ENCODE measurements at regions of chr19 and their contacts with region 1.

Region 1: GRCh38 chr19:12736995-12737834 is at the start of gene GET3:
- DNase-seq: peak; percentile 87 to 97
- H3K4me3 ChIP-seq: peak within 1 kb of the TSS; percentile 65 to 91 (median 83)
- H3K27ac ChIP-seq: peak within 1 kb of the TSS; percentile 98
- H3K4me1 ChIP-seq: peaks cover 3 to 13% (median 7%) of the 10 kb centered on the region in 4 experiments
- H3K27me3 ChIP-seq: no peaks in the 10 kb centered on the region
- CTCF ChIP-seq: no peak
- EP300 ChIP-seq: peak in 1 of 2 experiments; percentile 99; a peak in 2 of 3 replicates
- POLR2A ChIP-seq: peak; percentile 80 to 83
- RAD21 ChIP-seq: no peak
- total RNA-seq, gene GET3: 105 and 106 TPM in 2 replicates

Region 2: DNA sequence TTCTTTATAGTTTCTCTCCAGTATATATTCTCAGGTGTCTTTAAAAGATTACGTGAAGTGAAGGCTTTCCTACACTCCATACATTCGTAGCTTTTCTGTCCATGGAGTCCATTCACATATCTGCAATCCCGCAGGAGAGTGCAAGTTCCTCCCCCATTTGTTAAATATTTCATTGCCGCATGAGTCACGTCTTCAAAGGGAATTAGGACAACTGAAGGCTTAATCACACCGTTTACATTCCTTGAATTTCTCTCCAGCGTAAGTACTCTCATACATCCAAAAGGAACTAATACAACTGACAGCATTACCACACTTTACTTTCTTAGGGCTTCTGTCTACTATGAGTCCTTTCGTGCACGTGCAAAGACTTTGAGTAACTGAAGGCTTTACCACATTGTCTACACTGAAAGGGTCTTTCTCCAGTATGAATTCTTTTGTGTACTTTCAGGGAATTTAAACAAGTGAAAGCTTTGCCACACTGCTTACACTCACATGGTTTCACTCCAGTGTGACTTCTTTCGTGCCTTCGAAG is 157.0 kb before region 1 on chr19:
- CTCF ChIA-PET with region 1: no interaction called
- POLR2A ChIA-PET with region 1: no interaction called
- DNase-seq: no peak
- H3K4me3 ChIP-seq: no peak overlapping the region
- H3K27ac ChIP-seq: no peak overlapping the region
- H3K4me1 ChIP-seq: no peaks in the 10 kb centered on the region
- H3K27me3 ChIP-seq: no peaks in the 10 kb centered on the region
- CTCF ChIP-seq: no peak
- EP300 ChIP-seq: no peak
- POLR2A ChIP-seq: no peak
- RAD21 ChIP-seq: no peak

Region 3: DNA sequence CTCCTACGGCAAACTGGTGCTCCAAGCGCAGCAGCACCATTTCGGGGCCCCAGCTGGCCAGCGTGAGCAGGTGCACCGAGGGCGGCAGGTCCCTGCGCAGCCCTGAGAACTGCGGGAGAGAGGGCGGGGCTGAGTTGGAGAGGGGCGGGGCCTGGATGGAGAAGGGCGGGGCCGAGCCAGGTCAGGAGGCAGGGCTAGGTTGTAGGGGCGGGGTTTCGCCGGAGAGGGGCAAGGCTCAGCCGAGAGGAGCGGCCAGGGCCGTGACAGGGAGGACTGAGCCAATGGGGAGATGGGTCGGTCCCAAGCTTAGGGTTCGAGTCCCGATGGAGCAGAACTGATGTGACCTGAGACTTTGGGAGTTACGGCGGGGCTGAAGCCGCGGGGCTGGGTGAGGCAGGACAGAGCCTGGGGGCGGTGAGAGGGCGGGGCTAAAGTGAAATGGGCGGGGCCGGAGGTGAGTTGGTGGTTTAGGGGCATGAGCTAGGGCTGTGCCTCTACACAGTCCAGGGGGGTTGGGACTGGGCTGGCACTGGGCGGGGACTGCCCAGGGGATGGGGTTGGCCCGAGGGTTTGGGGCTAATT is 89.6 kb before region 1 on chr19:
- CTCF ChIA-PET with region 1: no interaction called
- POLR2A ChIA-PET with region 1: no interaction called
- DNase-seq: peak; percentile 80 to 86
- H3K4me3 ChIP-seq: peak overlapping the region in 1 of 4 experiments; percentile 40; a peak in 2 of 8 replicates
- H3K27ac ChIP-seq: no peak overlapping the region
- H3K4me1 ChIP-seq: no peaks in the 10 kb centered on the region
- H3K27me3 ChIP-seq: no peaks in the 10 kb centered on the region
- CTCF ChIP-seq: peak in 1 of 3 experiments; percentile 20; a peak in 1 of 4 replicates
- EP300 ChIP-seq: no peak
- POLR2A ChIP-seq: no peak
- RAD21 ChIP-seq: 0 out of 4 replicates have a peak, but pooled peaks of 1 of the 2 experiments have one; percentile 2

Region 4: DNA sequence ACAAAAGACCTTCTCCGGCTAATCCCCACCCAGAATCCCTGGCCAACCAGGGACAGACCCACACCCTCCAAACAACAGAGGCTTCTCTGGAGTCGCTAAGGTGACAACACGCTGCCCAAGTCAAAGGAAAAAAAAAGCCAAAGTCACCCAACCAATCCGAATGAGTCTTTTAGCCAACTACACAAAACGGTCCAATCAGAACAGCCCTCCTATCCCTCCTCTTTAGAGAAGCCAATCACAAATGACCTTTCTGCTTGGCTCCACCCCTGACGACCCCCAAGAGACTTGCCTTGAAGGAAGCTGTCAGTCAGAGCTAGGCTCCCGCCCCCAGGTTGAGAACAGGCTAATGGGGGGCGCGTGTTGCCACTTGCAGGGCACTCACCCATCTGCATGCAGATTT is 34.2 kb before region 1 on chr19:
- CTCF ChIA-PET with region 1: no interaction called
- POLR2A ChIA-PET with region 1: interaction called, 11 read pairs
- DNase-seq: peak; percentile 82 to 89
- H3K4me3 ChIP-seq: no peak overlapping the region
- H3K27ac ChIP-seq: peak overlapping the region; percentile 71; the same call in 1 of the 2 replicates
- H3K4me1 ChIP-seq: peaks cover 0 to 5% (median 2%) of the 10 kb centered on the region in 4 experiments; a peak in 2 of 7 replicates
- H3K27me3 ChIP-seq: no peaks in the 10 kb centered on the region
- CTCF ChIP-seq: no peak
- EP300 ChIP-seq: no peak
- POLR2A ChIP-seq: no peak
- RAD21 ChIP-seq: no peak

Region 5: DNA sequence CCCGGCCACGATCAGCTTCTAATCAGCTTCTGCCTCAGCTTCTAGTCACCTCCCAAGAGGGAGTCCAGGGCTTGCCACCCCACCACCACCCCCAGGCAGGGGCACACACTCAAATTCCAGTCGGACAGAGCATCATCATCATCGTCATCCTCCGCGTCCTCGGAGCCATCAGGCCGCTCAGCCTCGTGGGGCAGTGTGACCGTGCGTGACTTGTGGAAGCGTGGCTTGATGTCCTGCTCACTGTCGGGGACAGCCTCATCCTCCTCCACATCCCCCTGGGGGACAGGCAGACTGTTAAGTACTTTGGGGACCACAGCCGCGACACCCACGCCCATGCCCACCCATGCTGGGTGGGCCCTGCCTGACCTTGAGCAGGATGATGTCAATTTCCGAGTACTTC is 26.0 kb before region 1 on chr19:
- CTCF ChIA-PET with region 1: interaction called, 12 read pairs
- POLR2A ChIA-PET with region 1: interaction called, 258 read pairs
- DNase-seq: no peak
- H3K4me3 ChIP-seq: no peak overlapping the region
- H3K27ac ChIP-seq: no peak overlapping the region
- H3K4me1 ChIP-seq: no peaks in the 10 kb centered on the region
- H3K27me3 ChIP-seq: no peaks in the 10 kb centered on the region
- CTCF ChIP-seq: no peak
- EP300 ChIP-seq: no peak
- POLR2A ChIP-seq: no peak
- RAD21 ChIP-seq: no peak

Region 6: DNA sequence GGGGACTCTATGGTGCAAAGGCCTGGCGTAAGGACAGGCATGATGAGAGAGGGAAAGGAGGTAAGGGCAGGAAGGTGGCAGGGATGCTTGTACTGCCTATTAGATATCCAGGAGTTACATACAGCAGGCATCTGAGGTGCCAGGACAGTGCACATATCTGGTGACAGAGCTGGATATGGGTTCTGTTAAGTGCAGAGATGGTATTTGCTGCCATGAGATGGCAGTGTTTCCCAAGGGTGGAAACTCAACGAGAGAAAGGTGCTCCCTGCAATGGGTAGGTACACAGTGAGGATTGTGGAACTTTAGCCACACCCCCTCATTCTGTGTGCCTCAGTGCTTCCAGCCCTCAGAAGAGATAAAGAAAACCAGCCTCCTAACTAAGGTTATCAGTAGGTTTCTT is 20.4 kb before region 1 on chr19:
- CTCF ChIA-PET with region 1: interaction called, 20 read pairs
- POLR2A ChIA-PET with region 1: interaction called, 258 read pairs
- DNase-seq: no peak
- H3K4me3 ChIP-seq: no peak overlapping the region
- H3K27ac ChIP-seq: no peak overlapping the region
- H3K4me1 ChIP-seq: peaks cover 0 to 6% (median 2%) of the 10 kb centered on the region in 4 experiments; a peak in 4 of 7 replicates
- H3K27me3 ChIP-seq: no peaks in the 10 kb centered on the region
- CTCF ChIP-seq: peak; percentile 19 to 65 (median 41); a peak in 3 of 4 replicates
- EP300 ChIP-seq: no peak
- POLR2A ChIP-seq: no peak
- RAD21 ChIP-seq: peak; percentile 60 to 68

Region 7: GRCh38 chr19:12749938-12750521 is 12.8 kb after region 1 on chr19:
- CTCF ChIA-PET with region 1: interaction called, 87 read pairs
- POLR2A ChIA-PET with region 1: interaction called, 104 read pairs
- DNase-seq: no peak
- H3K4me3 ChIP-seq: no peak overlapping the region
- H3K27ac ChIP-seq: no peak overlapping the region
- H3K4me1 ChIP-seq: peaks cover 0 to 10% (median 4%) of the 10 kb centered on the region in 4 experiments; a peak in 4 of 7 replicates
- H3K27me3 ChIP-seq: no peaks in the 10 kb centered on the region; a peak in 3 of 7 replicates
- CTCF ChIP-seq: no peak
- EP300 ChIP-seq: no peak
- POLR2A ChIP-seq: no peak
- RAD21 ChIP-seq: no peak

Region 8: DNA sequence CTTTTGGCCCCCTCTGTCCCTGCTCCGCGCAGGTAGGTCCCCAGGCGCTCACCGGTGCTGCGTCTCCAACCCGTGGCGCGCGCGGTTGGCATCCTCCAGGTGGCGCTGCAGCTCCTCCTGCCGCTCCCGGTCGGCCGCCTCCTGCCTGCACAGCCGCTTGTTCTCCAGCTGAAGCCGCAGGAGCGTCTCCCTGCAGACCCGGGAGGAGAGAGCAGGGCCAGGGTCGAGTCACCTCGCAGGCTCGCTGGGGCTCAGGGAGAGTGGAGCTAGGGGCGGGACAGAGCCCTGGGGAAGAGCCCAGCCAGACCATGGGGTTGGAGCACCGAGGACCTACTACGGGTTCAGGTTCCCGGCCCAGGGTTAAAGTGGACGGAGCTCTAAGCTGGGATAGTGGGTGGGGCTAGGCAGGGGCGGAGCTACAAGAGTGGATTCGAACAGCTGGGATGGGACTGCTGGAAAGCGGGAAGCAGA is 28.9 kb after region 1 on chr19:
- CTCF ChIA-PET with region 1: interaction called, 87 read pairs
- POLR2A ChIA-PET with region 1: interaction called, 26 read pairs
- DNase-seq: peak in 1 of 2 experiments; percentile 61
- H3K4me3 ChIP-seq: no peak overlapping the region
- H3K27ac ChIP-seq: no peak overlapping the region
- H3K4me1 ChIP-seq: peaks cover 0 to 8% (median 4%) of the 10 kb centered on the region in 4 experiments; a peak in 6 of 7 replicates
- H3K27me3 ChIP-seq: no peaks in the 10 kb centered on the region
- CTCF ChIP-seq: no peak
- EP300 ChIP-seq: no peak
- POLR2A ChIP-seq: no peak
- RAD21 ChIP-seq: no peak

Region 9: GRCh38 chr19:12838182-12838885 is 101.1 kb after region 1 on chr19 and contains the start of gene MAST1:
- CTCF ChIA-PET with region 1: no interaction called
- POLR2A ChIA-PET with region 1: no interaction called
- DNase-seq: peak in 1 of 2 experiments; percentile 86
- H3K4me3 ChIP-seq: peak within 1 kb of the TSS; percentile 59 to 92 (median 62)
- H3K27ac ChIP-seq: no peak within 1 kb of the TSS
- H3K4me1 ChIP-seq: peaks cover 8 to 43% (median 19%) of the 10 kb centered on the region in 4 experiments
- H3K27me3 ChIP-seq: peaks cover 0 to 13% (median 9%) of the 10 kb centered on the region in 4 experiments; a peak in 5 of 7 replicates
- CTCF ChIP-seq: peak; percentile 63 to 89 (median 69)
- EP300 ChIP-seq: no peak
- POLR2A ChIP-seq: no peak
- RAD21 ChIP-seq: no peak; a peak in 1 of 4 replicates
- total RNA-seq, gene MAST1: 25.2 and 28.3 TPM in 2 replicates

Measured in H1 (cell line).